ENCODE measurements at regions of chr1 and their contacts with region 1.

Region 1: GRCh38 chr1:150067184-150068036 is at the start of gene VPS45:
- DNase-seq: peak; percentile 95
- total RNA-seq, gene VPS45: 35.3 and 43.2 TPM in 2 replicates

Region 2: DNA sequence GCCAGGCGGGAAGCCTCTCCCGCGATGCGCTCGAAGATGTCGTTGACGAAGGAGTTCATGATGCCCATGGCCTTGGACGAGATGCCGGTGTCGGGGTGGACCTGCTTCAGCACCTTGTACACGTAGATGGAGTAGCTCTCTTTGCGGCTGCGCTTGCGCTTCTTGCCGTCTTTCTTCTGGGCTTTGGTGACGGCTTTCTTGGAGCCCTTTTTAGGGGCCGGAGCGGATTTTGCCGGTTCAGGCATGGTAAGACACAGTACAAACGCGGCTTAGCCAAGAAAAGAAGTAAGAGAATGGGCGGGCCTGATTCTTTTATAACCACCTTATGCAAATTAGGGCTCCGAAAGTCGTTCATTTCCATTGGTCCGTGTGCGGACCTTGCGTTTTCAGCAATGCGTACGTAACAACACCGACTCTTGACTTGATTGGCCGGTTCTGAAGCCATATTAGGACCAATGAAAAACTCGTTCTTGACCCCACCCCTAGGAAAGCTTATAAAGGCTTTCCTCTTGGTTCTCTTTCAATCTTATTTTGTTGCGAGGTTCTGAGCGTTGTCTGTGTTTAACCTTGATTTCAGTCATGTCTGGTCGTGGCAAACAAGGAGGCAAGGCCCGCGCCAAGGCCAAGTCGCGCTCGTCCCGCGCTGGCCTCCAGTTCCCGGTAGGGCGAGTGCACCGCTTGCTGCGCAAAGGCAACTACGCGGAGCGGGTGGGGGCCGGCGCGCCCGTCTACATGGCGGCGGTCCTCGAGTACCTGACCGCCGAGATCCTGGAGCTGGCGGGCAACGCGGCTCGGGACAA is 180.8 kb before region 1 on chr1:
- in situ Hi-C with region 1: loop called (anchors 25 kb)
- DNase-seq: peak; percentile 100

Region 3: GRCh38 chr1:149906570-149907075 is 160.8 kb before region 1 on chr1:
- in situ Hi-C with region 1: no loop called
- DNase-seq: no peak

Region 4: DNA sequence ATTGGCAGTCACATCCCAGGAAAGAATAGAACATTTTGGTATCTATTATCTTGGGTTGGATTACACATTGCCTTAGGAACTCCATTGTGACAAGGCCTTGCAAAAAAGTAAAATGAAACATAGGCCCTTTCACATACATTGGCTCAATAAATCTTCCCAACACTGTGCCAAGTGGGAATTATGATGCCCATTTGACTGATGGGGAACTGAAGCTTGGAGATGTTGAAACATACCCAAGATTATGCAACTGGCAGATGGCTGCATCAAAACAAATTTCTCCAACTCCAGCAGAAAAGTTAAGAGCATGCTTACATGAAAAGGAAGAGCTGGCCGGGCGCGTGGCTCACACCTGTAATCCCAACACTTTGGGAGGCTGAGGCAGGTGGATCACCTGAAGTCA is 109.2 kb after region 1 on chr1:
- in situ Hi-C with region 1: no loop called
- DNase-seq: peak; percentile 62

Measured in G401 (cell line).